A549 (cell line): ENCODE measurements at regions of chr6 and their contacts with region 1.

Region 1: DNA sequence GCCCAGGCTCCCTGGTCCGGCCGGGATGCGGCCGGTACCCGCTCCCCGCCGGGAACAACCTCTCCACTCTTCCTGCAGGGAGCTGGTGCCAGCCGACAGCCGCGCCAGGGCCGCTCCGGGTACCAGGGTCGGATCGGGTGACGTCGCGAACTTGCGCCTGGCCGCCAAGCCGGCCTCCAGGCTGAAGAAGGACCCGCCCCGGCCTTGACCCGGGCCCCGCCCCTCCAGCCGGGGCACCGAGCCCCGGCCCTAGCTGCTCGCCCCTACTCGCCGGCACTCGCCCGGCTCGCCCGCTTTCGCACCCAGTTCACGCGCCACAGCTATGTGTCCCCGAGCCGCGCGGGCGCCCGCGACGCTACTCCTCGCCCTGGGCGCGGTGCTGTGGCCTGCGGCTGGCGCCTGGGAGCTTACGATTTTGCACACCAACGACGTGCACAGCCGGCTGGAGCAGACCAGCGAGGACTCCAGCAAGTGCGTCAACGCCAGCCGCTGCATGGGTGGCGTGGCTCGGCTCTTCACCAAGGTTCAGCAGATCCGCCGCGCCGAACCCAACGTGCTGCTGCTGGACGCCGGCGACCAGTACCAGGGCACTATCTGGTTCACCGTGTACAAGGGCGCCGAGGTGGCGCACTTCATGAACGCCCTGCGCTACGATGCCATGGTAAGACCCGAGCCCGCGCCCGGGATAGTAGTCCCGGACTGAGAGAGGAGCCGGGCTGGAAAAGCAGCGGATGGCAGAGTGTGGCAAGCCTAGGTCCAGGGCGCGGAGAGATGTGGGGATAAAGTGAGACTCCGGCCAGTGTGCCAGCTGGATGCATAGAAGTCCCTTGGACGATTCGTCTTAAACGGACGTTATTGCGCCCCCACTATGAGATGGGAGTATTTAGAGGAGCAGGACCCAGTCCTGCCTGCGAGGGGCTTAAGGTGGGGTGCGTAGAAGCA is at the start of gene NT5E:
- DNase-seq: peak; percentile 55 to 77
- ATAC-seq: peak; percentile 90 to 93
- H3K4me3 ChIP-seq: peak within 1 kb of the TSS; percentile 84
- H3K27ac ChIP-seq: peak within 1 kb of the TSS; percentile 88 to 91
- H3K4me1 ChIP-seq: peaks cover 36% of the 10 kb centered on the region
- CTCF ChIP-seq: peak; percentile 38; the same call in 2 of the 3 replicates
- EP300 ChIP-seq: no peak
- POLR2A ChIP-seq: peak; percentile 58
- RAD21 ChIP-seq: 0 out of 5 replicates have a peak, but pooled peaks of 1 of the 2 experiments have one; percentile 2
- polyA plus RNA-seq, gene NT5E: 54.8 and 61.0 TPM in 2 replicates

Region 2: GRCh38 chr6:85354761-85355618 is 95.1 kb before region 1 on chr6:
- CTCF ChIA-PET with region 1: interaction called, 11 read pairs
- POLR2A ChIA-PET with region 1: interaction called, 26 read pairs
- DNase-seq: peak; percentile 33 to 59
- ATAC-seq: peak; percentile 91 to 95
- H3K4me3 ChIP-seq: no peak overlapping the region
- H3K27ac ChIP-seq: peak overlapping the region; percentile 41 to 67; a peak in 5 of 6 replicates
- H3K4me1 ChIP-seq: peaks cover 15% of the 10 kb centered on the region
- CTCF ChIP-seq: peak; percentile 88
- EP300 ChIP-seq: no peak
- POLR2A ChIP-seq: no peak
- RAD21 ChIP-seq: peak; percentile 92 to 97

Region 3: GRCh38 chr6:85360794-85361642 is 89.1 kb before region 1 on chr6:
- CTCF ChIA-PET with region 1: interaction called, 11 read pairs
- POLR2A ChIA-PET with region 1: interaction called, 26 read pairs
- DNase-seq: peak; percentile 53 to 88
- ATAC-seq: peak; percentile 98 to 99
- H3K4me3 ChIP-seq: no peak overlapping the region
- H3K27ac ChIP-seq: peak overlapping the region; percentile 75 to 81
- H3K4me1 ChIP-seq: peaks cover 44% of the 10 kb centered on the region
- CTCF ChIP-seq: no peak
- EP300 ChIP-seq: no peak
- POLR2A ChIP-seq: no peak
- RAD21 ChIP-seq: peak in 1 of 2 experiments; percentile 5; a peak in 2 of 5 replicates

Region 4: GRCh38 chr6:85404502-85405174 is 45.5 kb before region 1 on chr6:
- CTCF ChIA-PET with region 1: interaction called, 5 read pairs
- POLR2A ChIA-PET with region 1: interaction called, 52 read pairs
- DNase-seq: peak; percentile 65 to 90
- ATAC-seq: peak; percentile 85 to 88
- H3K4me3 ChIP-seq: peak overlapping the region; percentile 36
- H3K27ac ChIP-seq: peak overlapping the region; percentile 93 to 94
- H3K4me1 ChIP-seq: peaks cover 58% of the 10 kb centered on the region
- CTCF ChIP-seq: no peak
- EP300 ChIP-seq: 0 out of 5 replicates have a peak, but pooled peaks of 1 of the 2 experiments have one; percentile 33
- POLR2A ChIP-seq: no peak
- RAD21 ChIP-seq: 0 out of 5 replicates have a peak, but pooled peaks of 1 of the 2 experiments have one; percentile 7

Region 5: DNA sequence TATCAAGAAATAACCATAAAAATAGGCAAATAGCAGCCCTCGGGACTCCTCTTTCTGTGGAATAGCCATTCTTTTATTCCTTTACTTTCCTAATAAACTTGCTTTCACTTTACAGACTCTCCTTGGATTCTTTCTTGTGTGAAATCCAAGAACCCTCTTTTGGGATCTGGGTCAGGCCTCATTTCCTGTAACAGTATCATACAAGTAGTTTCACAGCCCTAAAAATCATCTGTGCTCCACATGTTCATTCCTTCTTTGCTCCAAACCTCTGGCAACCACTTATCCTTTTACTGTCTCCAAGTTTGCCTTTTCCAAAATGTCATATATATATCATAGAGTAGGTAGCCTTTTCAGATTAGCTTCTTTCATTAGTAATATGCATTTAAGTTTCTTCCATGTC is 13.7 kb before region 1 on chr6:
- CTCF ChIA-PET with region 1: interaction called, 12 read pairs
- POLR2A ChIA-PET with region 1: no interaction called
- DNase-seq: no peak
- ATAC-seq: no peak
- H3K4me3 ChIP-seq: no peak overlapping the region
- H3K27ac ChIP-seq: no peak overlapping the region
- H3K4me1 ChIP-seq: peaks cover 3% of the 10 kb centered on the region; the same call in 1 of the 3 replicates
- CTCF ChIP-seq: no peak
- EP300 ChIP-seq: no peak
- POLR2A ChIP-seq: no peak
- RAD21 ChIP-seq: no peak

Region 6: DNA sequence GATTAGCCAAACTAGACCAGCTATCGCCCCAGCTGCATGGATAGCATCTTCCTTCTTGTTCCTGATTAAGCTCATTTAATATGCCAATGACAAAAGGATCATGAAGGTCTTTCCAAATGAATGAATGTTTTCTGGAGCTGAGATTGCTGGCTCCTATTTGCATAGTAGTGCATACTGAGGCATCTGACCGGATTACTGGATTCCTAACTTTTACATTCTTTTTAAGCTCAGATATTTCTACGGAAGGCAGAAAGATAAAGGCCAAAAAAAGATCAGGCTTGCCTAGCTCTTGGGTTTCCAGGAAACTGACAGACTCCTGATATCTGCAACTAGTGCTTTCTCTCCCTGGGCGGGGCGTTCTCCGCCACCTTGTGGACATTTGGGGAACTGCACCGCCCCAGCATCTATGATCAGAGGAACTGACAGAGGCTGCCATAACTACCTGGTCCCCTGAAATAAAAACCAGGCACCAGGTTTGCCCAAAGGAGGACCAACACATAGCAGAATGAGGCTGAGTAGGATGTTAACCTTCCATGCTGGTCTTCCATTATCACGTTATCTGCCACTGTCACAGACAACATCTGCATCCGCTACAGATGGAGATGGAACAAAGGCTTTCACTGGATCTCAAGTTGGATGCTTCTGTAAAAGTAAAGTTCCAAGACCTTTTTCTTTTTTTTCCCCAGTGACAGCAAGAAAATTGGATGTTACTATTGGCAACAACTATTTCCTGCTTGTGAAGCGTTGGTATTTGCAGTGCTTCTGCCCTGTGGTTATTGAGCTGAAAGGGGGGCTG is 33.0 kb after region 1 on chr6:
- CTCF ChIA-PET with region 1: interaction called, 36 read pairs
- POLR2A ChIA-PET with region 1: interaction called, 3 read pairs
- DNase-seq: peak; percentile 37 to 55
- ATAC-seq: peak; percentile 94 to 98
- H3K4me3 ChIP-seq: no peak overlapping the region
- H3K27ac ChIP-seq: peak overlapping the region in 1 of 2 experiments; percentile 33; a peak in 3 of 6 replicates
- H3K4me1 ChIP-seq: peaks cover 6% of the 10 kb centered on the region; the same call in 1 of the 3 replicates
- CTCF ChIP-seq: peak; percentile 82
- EP300 ChIP-seq: no peak
- POLR2A ChIP-seq: no peak
- RAD21 ChIP-seq: peak; percentile 86 to 89

Region 7: DNA sequence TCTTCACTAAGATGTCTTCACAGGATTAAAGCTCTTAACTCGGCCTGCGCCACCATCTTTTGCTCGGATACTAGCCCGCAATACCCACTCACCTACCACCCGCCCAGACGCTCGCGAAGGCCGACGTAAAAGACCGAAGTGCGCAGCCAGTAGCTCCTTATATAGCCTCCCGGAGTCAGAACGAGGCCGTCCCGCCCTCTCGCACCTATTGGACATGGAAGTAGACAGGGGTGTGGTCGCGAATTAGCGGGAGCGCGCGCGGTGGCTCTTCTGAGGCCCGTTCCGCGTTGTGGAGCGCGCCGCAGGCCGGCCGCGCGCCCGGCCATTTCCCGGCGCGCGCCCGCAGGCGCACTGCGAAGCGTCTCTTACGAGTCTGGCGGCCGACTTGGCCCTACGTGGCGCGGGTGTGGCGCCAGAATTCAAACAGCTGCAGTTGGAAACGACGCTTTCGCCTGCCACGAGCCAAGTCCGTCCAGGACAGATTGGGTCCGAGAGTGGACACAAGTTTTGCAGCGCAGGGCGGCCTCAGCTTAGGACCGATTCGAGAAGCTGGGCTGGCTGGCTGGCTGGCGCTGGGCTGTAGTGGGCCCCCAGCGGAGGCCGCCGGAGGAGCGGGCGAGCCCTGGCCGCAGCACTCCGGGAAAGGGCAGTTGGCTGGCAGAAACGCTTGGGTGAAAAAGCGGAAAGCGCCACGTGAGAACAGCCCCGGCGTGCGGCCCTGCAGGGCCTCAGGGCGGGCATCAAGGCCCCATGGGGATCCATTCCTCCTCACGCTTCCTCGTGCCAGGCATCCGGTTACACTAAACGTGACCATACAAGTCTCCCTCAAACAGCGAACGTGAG is 228.7 kb after region 1 on chr6:
- CTCF ChIA-PET with region 1: no interaction called
- POLR2A ChIA-PET with region 1: interaction called, 10 read pairs
- DNase-seq: peak; percentile 80 to 98
- ATAC-seq: peak; percentile 87 to 89
- H3K4me3 ChIP-seq: peak overlapping the region; percentile 97
- H3K27ac ChIP-seq: peak overlapping the region; percentile 94 to 97
- H3K4me1 ChIP-seq: peaks cover 23% of the 10 kb centered on the region; the same call in 2 of the 3 replicates
- CTCF ChIP-seq: no peak
- EP300 ChIP-seq: no peak
- POLR2A ChIP-seq: peak; percentile 99
- RAD21 ChIP-seq: no peak